Heart left ventricle (tissue), 16 donors: ENCODE measurements at regions of chr9 and their contacts with region 1.

Region 1: GRCh38 chr9:75096796-75097195 is 8.5 kb downstream of the OSTF1 start:
- DNase-seq: no peak
- ATAC-seq: no peak
- H3K4me3 ChIP-seq: no peak overlapping the region
- H3K27ac ChIP-seq: no peak overlapping the region
- H3K4me1 ChIP-seq: peaks cover 0 to 71% (median 17%) of the 10 kb centered on the region in 12 donors
- H3K27me3 ChIP-seq: no peaks in the 10 kb centered on the region
- CTCF ChIP-seq: no peak
- POLR2A ChIP-seq: no peak

Region 2: GRCh38 chr9:74610523-74611061 is 486.2 kb before region 1 on chr9:
- intact Hi-C with region 1: no loop called
- DNase-seq: no peak
- ATAC-seq: no peak
- H3K4me3 ChIP-seq: no peak overlapping the region
- H3K27ac ChIP-seq: no peak overlapping the region
- H3K4me1 ChIP-seq: no peaks in the 10 kb centered on the region
- H3K27me3 ChIP-seq: no peaks in the 10 kb centered on the region
- CTCF ChIP-seq: no peak
- POLR2A ChIP-seq: no peak

Region 3: DNA sequence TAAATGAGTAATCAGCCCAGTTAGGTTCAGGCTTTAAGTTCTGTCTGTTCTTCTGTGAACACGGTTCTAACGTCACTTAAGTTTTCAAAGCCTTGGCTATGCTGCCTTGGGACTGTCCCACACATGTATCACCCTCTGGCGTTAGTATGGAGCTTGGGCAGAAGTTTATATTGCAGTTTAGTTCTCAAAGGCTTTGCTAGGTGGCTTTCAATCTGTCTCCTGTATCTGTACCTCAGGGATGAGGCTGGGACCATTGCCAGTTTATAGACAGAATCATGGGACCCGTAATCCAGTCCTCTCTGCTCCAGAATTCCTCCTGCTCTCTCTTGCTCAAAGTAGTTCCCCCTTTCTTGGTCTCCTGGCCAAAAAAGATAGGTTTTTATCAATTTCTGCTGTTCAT is 156.2 kb before region 1 on chr9:
- intact Hi-C with region 1: no loop called
- DNase-seq: no peak
- ATAC-seq: peak in 1 of 4 donors; percentile 72
- H3K4me3 ChIP-seq: no peak overlapping the region
- H3K27ac ChIP-seq: no peak overlapping the region
- H3K4me1 ChIP-seq: no peaks in the 10 kb centered on the region
- H3K27me3 ChIP-seq: no peaks in the 10 kb centered on the region
- CTCF ChIP-seq: peak in 4 of 12 donors; percentile 10 to 30 (median 20)
- POLR2A ChIP-seq: no peak

Region 4: GRCh38 chr9:75064307-75065025 is 32.3 kb before region 1 on chr9:
- intact Hi-C with region 1: no loop called
- DNase-seq: peak in 1 of 5 donors; percentile 20
- ATAC-seq: peak in 3 of 4 donors; percentile 27 to 84 (median 41)
- H3K4me3 ChIP-seq: no peak overlapping the region
- H3K27ac ChIP-seq: no peak overlapping the region
- H3K4me1 ChIP-seq: no peaks in the 10 kb centered on the region
- H3K27me3 ChIP-seq: no peaks in the 10 kb centered on the region
- CTCF ChIP-seq: no peak
- POLR2A ChIP-seq: no peak

Region 5: DNA sequence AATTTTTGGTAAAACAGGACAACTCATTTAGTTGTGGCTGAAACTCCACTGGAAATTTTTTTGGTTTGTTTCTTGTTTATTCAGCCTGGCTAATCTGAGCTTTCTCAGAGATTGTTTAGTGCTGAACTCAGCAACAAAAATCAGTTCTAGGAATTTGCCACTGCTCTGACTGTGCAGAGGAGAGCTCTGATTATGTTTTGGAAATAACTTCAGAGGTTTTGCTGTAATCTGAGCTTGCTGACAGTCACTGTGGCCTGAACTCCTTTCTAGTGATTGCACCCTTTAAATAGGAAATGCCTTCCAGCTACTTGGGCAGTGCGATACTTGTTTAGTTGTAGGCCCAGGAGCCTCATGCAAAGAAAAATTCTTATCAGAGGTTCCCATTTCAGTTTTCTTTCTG is 51.8 kb after region 1 on chr9:
- intact Hi-C with region 1: loop called in 1 of 10 experiments (anchors 10 kb)
- DNase-seq: no peak
- ATAC-seq: peak in 3 of 4 donors; percentile 49 to 68 (median 62)
- H3K4me3 ChIP-seq: no peak overlapping the region
- H3K27ac ChIP-seq: peak overlapping the region in 5 of 12 donors; percentile 14 to 82 (median 21)
- H3K4me1 ChIP-seq: peaks cover 0 to 70% (median 7%) of the 10 kb centered on the region in 12 donors
- H3K27me3 ChIP-seq: no peaks in the 10 kb centered on the region
- CTCF ChIP-seq: no peak
- POLR2A ChIP-seq: no peak